HCT116 (cell line): ENCODE measurements at regions of chr2 and their contacts with region 1.

Region 1: GRCh38 chr2:120012771-120013596 is at the start of gene EPB41L5:
- DNase-seq: peak; percentile 87
- ATAC-seq: peak; percentile 90
- H3K4me3 ChIP-seq: peak within 1 kb of the TSS; percentile 62 to 77
- H3K27ac ChIP-seq: peak within 1 kb of the TSS; percentile 60
- H3K4me1 ChIP-seq: peaks cover 5 to 27% of the 10 kb centered on the region in 2 experiments; a peak in 3 of 4 replicates
- H3K27me3 ChIP-seq: no peaks in the 10 kb centered on the region
- CTCF ChIP-seq: no peak
- POLR2A ChIP-seq: peak; percentile 79
- RAD21 ChIP-seq: no peak
- total RNA-seq, gene EPB41L5: 14.7 TPM

Region 2: DNA sequence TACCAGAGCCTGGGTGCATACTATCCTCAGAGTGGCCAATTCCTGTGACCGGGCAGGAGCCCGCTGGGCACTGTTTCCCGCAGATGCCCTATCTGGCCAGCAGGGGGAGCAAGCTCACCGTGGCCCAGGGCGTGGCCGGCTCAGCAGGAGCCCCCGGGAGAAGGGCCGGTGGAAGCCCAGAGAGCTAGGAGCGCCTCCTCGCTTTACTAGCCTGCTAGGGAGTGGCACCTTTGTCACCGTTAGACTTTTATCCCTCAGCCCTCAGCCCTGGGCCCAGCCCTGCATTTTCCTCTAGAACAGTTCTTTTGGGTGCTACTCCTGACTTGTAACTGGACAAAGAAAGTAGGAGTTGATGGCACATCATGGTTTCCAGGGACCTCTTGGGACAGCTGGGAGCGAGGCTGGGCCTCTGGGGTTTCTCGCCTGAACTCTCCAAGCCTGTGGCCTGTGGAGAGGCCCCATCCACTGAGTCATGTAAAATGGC is 310.0 kb before region 1 on chr2:
- CTCF ChIA-PET with region 1: no interaction called
- POLR2A ChIA-PET with region 1: no interaction called
- RAD21 ChIA-PET with region 1: no interaction called
- intact Hi-C with region 1: loop called (anchors 10 kb)
- DNase-seq: peak; percentile 58
- ATAC-seq: peak; percentile 99
- H3K4me3 ChIP-seq: no peak overlapping the region
- H3K27ac ChIP-seq: no peak overlapping the region
- H3K4me1 ChIP-seq: peaks cover 0 to 5% of the 10 kb centered on the region in 2 experiments; a peak in 1 of 4 replicates
- H3K27me3 ChIP-seq: no peaks in the 10 kb centered on the region
- CTCF ChIP-seq: peak; percentile 93 to 98 (median 97)
- POLR2A ChIP-seq: no peak
- RAD21 ChIP-seq: peak; percentile 92

Region 3: GRCh38 chr2:119759451-119760236 is 253.3 kb before region 1 on chr2 and contains the start of gene PTPN4:
- CTCF ChIA-PET with region 1: no interaction called
- POLR2A ChIA-PET with region 1: no interaction called
- RAD21 ChIA-PET with region 1: no interaction called
- intact Hi-C with region 1: loop called (anchors 5 kb)
- DNase-seq: peak; percentile 96
- ATAC-seq: peak; percentile 95
- H3K4me3 ChIP-seq: peak within 1 kb of the TSS; percentile 63 to 81
- H3K27ac ChIP-seq: peak within 1 kb of the TSS; percentile 97
- H3K4me1 ChIP-seq: peaks cover 17 to 40% of the 10 kb centered on the region in 2 experiments; a peak in 3 of 4 replicates
- H3K27me3 ChIP-seq: no peaks in the 10 kb centered on the region
- CTCF ChIP-seq: no peak
- POLR2A ChIP-seq: peak; percentile 72
- RAD21 ChIP-seq: no peak
- total RNA-seq, gene PTPN4: 38.4 TPM

Region 4: GRCh38 chr2:120034027-120034426 is 21.0 kb after region 1 on chr2:
- CTCF ChIA-PET with region 1: no interaction called
- POLR2A ChIA-PET with region 1: no interaction called
- RAD21 ChIA-PET with region 1: no interaction called
- intact Hi-C with region 1: no loop called
- DNase-seq: no peak
- ATAC-seq: no peak
- H3K4me3 ChIP-seq: no peak overlapping the region
- H3K27ac ChIP-seq: no peak overlapping the region
- H3K4me1 ChIP-seq: no peaks in the 10 kb centered on the region
- H3K27me3 ChIP-seq: no peaks in the 10 kb centered on the region
- CTCF ChIP-seq: no peak
- POLR2A ChIP-seq: no peak
- RAD21 ChIP-seq: no peak